Activated B cell treated with CpG ODN at 0.5 μM for 24 hours (primary cell): ENCODE measurements at regions of chr19 and their contacts with region 1.

Region 1: GRCh38 chr19:50679177-50680125 is 30.2 kb downstream of the C19orf81 start:
- DNase-seq: peak; percentile 80
- ATAC-seq: peak; percentile 99
- H3K4me3 Mint-ChIP-seq: peak overlapping the region; percentile 68
- H3K27ac Mint-ChIP-seq: peak overlapping the region; percentile 88
- H3K4me1 Mint-ChIP-seq: peaks cover 17% of the 10 kb centered on the region
- H3K27me3 Mint-ChIP-seq: peaks cover 13% of the 10 kb centered on the region
- CTCF ChIP-seq: no peak

Region 2: DNA sequence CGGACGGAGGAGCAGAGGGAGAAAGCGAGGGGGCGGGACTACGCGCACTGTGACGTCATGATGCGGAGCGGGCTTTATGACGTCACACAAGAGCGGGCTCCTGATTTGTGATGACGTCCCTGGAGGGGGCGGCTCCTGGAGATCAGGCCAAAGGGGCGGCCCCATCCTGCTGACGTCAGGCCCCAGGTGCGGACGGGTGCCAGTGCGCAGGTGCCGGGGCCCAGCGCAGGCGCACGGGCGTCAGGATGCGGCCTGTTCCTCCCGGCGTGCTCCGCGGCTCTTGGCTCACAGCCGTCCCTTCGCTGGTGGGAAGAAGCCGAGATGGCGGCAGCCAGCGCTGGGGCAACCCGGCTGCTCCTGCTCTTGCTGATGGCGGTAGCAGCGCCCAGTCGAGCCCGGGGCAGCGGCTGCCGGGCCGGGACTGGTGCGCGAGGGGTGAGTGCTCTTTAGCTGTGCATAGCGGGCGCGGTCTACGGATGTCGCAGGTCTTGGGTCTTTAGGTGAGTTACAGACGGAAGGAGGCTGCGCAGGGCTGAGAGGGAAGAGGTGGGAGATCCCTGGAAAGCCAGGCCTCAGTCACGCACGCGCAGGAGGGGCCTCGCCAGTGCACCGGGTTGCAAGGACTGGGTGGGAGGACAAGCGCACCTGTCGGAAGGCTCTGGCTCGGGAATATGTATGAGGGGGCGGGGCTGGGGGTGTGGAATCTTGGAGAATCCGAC is 203.1 kb before region 1 on chr19 and contains the starts of genes EMC10 and GARIN5A:
- CTCF ChIA-PET with region 1: no interaction called
- POLR2A ChIA-PET with region 1: no interaction called
- intact Hi-C with region 1: loop called (anchors 5 kb)
- DNase-seq: peak; percentile 95
- ATAC-seq: peak; percentile 95
- H3K4me3 Mint-ChIP-seq: peak within 1 kb of the TSS; percentile 93
- H3K27ac Mint-ChIP-seq: peak within 1 kb of the TSS; percentile 85
- H3K4me1 Mint-ChIP-seq: peaks cover 23% of the 10 kb centered on the region
- H3K27me3 Mint-ChIP-seq: no peaks in the 10 kb centered on the region
- CTCF ChIP-seq: no peak
- total RNA-seq, gene EMC10: 70.8 and 72.1 TPM in 2 replicates
- total RNA-seq, gene GARIN5A: 0.29 and 0.67 TPM in 2 replicates

Region 3: DNA sequence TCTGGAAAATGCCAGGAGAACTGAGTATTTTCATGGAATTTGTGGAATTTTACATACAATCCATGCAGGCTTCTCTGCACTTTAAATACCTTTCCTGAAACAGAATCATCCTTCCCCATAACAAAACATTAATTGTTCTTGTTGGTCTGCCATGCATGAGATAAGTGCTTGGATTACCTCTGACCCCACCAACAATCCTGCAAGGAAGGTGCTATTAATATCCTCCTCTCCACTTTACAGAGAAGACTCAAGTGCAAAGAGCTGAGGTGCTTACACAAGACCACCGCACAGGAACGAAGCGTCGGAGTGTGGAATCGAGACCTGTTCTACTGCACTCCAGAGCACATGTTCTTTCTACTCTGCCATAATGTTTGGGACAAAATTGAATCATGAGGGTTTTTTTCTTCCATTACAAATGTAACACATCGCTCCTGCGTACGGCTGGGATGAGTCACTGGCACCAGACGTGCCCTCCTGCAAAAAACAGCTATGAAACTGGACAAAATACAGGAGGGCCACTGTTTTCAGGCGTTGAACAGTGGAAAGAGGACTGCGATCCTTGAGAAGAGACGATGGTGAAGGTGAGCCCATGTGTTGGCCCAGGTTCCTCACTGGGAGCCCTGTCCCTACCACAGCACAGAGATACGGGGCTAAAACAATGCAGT is 98.3 kb before region 1 on chr19:
- CTCF ChIA-PET with region 1: no interaction called
- POLR2A ChIA-PET with region 1: no interaction called
- intact Hi-C with region 1: no loop called
- DNase-seq: no peak
- ATAC-seq: no peak
- H3K4me3 Mint-ChIP-seq: no peak overlapping the region
- H3K27ac Mint-ChIP-seq: no peak overlapping the region
- H3K4me1 Mint-ChIP-seq: no peaks in the 10 kb centered on the region
- H3K27me3 Mint-ChIP-seq: peaks cover 2% of the 10 kb centered on the region
- CTCF ChIP-seq: no peak

Region 4: DNA sequence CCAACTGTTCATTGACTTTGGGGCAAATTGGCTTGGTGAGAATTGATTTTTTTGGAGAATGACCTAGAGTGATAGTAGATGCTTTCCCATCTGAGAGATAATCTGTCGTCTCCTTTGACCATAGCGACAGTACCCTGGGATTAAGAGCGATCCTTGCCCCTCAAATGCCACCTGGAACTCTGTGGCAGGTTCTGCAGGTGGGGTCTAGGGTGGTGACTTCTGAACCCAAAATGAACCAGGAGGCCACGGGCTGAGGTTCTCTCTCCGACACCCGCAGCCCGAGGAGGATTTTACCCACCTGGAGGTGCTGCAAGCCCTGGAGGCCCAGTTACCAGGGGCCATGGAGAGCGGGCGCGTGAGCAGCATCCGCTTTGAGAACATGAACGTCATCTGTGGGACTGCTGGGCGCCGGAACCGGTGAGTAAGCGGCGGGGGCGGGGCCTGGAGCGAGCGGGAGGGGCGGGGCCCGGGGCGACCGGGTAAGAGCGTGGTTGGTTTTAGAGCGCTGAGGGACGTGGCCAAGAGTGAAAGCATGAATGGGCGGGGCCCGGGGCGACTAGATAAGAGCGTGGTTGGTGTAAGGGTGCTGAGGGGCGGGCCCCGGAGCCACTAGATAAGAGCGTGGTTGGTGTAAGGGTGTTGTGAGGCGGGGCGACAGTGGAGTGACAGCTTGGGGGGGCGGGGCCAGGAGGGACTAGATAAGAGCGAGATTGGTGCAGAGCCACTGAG is 21.6 kb before region 1 on chr19:
- CTCF ChIA-PET with region 1: no interaction called
- POLR2A ChIA-PET with region 1: interaction called, 5 read pairs
- intact Hi-C with region 1: loop called (anchors 1 kb)
- DNase-seq: peak; percentile 61
- ATAC-seq: peak; percentile 87
- H3K4me3 Mint-ChIP-seq: peak overlapping the region; percentile 76
- H3K27ac Mint-ChIP-seq: peak overlapping the region; percentile 80
- H3K4me1 Mint-ChIP-seq: peaks cover 23% of the 10 kb centered on the region
- H3K27me3 Mint-ChIP-seq: peaks cover 52% of the 10 kb centered on the region
- CTCF ChIP-seq: no peak

Region 5: GRCh38 chr19:50777754-50778303 is 98.4 kb after region 1 on chr19:
- CTCF ChIA-PET with region 1: no interaction called
- POLR2A ChIA-PET with region 1: no interaction called
- intact Hi-C with region 1: no loop called
- DNase-seq: no peak
- ATAC-seq: no peak
- H3K4me3 Mint-ChIP-seq: no peak overlapping the region
- H3K27ac Mint-ChIP-seq: no peak overlapping the region
- H3K4me1 Mint-ChIP-seq: peaks cover 3% of the 10 kb centered on the region
- H3K27me3 Mint-ChIP-seq: peaks cover 55% of the 10 kb centered on the region
- CTCF ChIP-seq: no peak